Dendritic cell treated with granulocyte-macrophage colony-stimulating factor and Interleukin-4, amounts not matched to agents 40 ng/mL and 50 ng/mL, for 4 days (primary cell): ENCODE measurements at regions of chr1 and their contacts with region 1.

Region 1: GRCh38 chr1:157490467-157491165 is 61.7 kb downstream of the FCRL5 start:
- H3K4me3 Mint-ChIP-seq: no peak overlapping the region
- H3K27ac Mint-ChIP-seq: no peak overlapping the region
- H3K4me1 Mint-ChIP-seq: peaks cover 7% of the 10 kb centered on the region
- H3K27me3 Mint-ChIP-seq: peaks cover 21% of the 10 kb centered on the region

Region 2: GRCh38 chr1:157193702-157194391 is 296.8 kb before region 1 on chr1:
- intact Hi-C with region 1: loop called (anchors 2 kb)
- H3K4me3 Mint-ChIP-seq: no peak overlapping the region
- H3K27ac Mint-ChIP-seq: no peak overlapping the region
- H3K4me1 Mint-ChIP-seq: no peaks in the 10 kb centered on the region
- H3K27me3 Mint-ChIP-seq: peaks cover 53% of the 10 kb centered on the region

Region 3: DNA sequence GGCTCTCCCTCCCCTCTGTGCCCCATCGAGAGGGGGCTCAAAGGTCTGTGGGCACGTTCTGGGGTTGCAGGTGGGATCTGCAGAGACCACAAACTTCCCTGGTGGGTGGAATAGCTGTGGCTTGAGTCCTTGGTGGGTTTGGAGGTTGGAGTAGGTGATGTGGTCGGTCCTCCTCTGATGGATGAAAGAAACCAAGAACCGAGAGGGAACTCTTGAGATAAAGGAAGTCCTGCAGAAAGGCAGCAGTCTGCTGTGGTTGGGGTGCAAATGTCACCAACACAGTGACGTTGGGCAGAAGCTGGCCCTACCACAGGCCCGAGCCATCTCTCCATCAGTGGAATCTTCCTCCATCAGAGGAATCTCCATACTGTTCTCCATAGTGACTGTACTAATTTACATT is 110.1 kb before region 1 on chr1:
- intact Hi-C with region 1: loop called (anchors 2 kb)
- H3K4me3 Mint-ChIP-seq: no peak overlapping the region
- H3K27ac Mint-ChIP-seq: no peak overlapping the region
- H3K4me1 Mint-ChIP-seq: peaks cover 14% of the 10 kb centered on the region
- H3K27me3 Mint-ChIP-seq: peaks cover 3% of the 10 kb centered on the region